HEK293 (cell line): ENCODE measurements at regions of chr9 and their contacts with region 1.

Region 1: DNA sequence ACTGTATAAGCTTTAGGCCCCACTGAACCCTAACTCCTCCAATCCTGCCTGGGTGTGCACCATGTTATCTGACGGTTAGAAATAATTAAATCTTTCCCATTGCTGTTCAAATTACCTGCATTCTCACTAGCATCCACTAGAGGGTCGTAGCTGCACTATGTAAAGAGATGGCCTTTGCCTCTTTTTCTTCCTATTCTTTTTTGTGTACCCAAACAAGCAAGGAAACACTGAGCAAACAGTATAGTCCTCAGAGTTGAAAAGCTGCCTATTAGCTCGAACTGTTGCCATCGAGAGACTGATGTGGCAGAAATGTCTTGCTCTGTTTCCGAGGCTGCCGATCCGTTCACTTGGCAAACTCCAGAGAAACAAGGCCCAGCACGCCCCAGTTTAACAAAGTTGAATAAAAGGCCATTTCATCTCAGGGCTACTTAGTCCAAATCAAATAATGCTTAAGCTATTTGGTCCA is 163.8 kb upstream of the TRPM3 start:
- H3K4me3 ChIP-seq: no peak overlapping the region
- H3K27ac ChIP-seq: no peak overlapping the region
- H3K4me1 ChIP-seq: no peaks in the 10 kb centered on the region
- CTCF ChIP-seq: 0 out of 2 replicates have a peak, but pooled peaks have one; percentile 17

Region 2: GRCh38 chr9:70998962-70999361 is 286.3 kb before region 1 on chr9:
- CTCF ChIA-PET with region 1: no interaction called
- POLR2A ChIA-PET with region 1: no interaction called
- H3K4me3 ChIP-seq: no peak overlapping the region
- H3K27ac ChIP-seq: no peak overlapping the region
- H3K4me1 ChIP-seq: no peaks in the 10 kb centered on the region
- CTCF ChIP-seq: no peak

Region 3: DNA sequence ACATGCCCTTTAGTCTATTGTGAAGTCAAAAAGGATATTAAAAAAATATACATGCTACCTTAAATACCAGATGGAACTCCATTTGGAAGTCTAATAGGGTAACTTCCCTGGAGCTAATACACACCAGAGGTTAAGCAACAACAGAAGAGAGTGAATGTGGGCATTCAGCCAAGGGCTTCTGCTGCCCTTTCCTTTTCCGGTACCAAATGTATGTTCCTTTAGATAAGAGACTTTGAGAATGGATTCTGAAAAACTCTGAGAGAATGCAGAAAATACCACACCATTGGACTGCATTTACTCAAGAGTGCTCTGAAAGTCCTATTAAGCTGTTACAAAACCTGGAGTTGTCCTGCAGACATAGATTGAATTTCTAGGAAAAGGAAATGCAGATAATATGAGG is 140.0 kb before region 1 on chr9:
- CTCF ChIA-PET with region 1: no interaction called
- POLR2A ChIA-PET with region 1: no interaction called
- H3K4me3 ChIP-seq: no peak overlapping the region
- H3K27ac ChIP-seq: no peak overlapping the region
- H3K4me1 ChIP-seq: no peaks in the 10 kb centered on the region
- CTCF ChIP-seq: no peak

Region 4: GRCh38 chr9:71270554-71270953 is 14.7 kb before region 1 on chr9:
- CTCF ChIA-PET with region 1: interaction called, 11 read pairs
- POLR2A ChIA-PET with region 1: no interaction called
- H3K4me3 ChIP-seq: no peak overlapping the region
- H3K27ac ChIP-seq: no peak overlapping the region
- H3K4me1 ChIP-seq: no peaks in the 10 kb centered on the region
- CTCF ChIP-seq: no peak

Region 5: GRCh38 chr9:71295928-71296327 is 10.7 kb after region 1 on chr9:
- CTCF ChIA-PET with region 1: interaction called, 15 read pairs
- POLR2A ChIA-PET with region 1: no interaction called
- H3K4me3 ChIP-seq: no peak overlapping the region
- H3K27ac ChIP-seq: no peak overlapping the region
- H3K4me1 ChIP-seq: no peaks in the 10 kb centered on the region
- CTCF ChIP-seq: no peak

Region 6: DNA sequence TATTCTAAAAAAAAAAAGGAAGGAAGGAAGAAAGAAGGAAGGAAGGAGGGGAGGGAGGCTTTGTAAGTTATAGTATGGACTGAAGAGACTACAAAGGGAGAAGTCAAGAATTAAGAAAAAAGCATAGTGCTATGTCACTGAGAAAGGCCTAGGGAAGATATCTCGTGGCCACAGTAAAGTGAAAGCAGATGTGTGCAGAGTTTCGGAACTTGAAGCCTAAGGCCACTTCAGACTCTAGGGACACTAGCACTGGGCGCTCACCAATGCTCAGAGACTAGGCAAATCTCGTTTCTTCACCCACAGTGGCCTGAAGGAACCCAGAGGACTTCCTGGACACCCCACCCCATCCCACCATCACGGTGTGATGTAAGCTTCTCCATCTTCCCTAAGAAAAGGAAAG is 17.6 kb after region 1 on chr9:
- CTCF ChIA-PET with region 1: interaction called, 11 read pairs
- POLR2A ChIA-PET with region 1: no interaction called
- H3K4me3 ChIP-seq: no peak overlapping the region
- H3K27ac ChIP-seq: no peak overlapping the region
- H3K4me1 ChIP-seq: no peaks in the 10 kb centered on the region
- CTCF ChIP-seq: no peak

Region 7: GRCh38 chr9:71768388-71769174 is 483.4 kb after region 1 on chr9 and contains the start of gene CEMIP2:
- CTCF ChIA-PET with region 1: interaction called, 11 read pairs
- POLR2A ChIA-PET with region 1: interaction called, 3 read pairs
- H3K4me3 ChIP-seq: peak within 1 kb of the TSS; percentile 92
- H3K27ac ChIP-seq: peak within 1 kb of the TSS; percentile 88
- H3K4me1 ChIP-seq: no peaks in the 10 kb centered on the region
- CTCF ChIP-seq: no peak

Region 8: GRCh38 chr9:71819115-71819739 is 534.0 kb after region 1 on chr9:
- CTCF ChIA-PET with region 1: interaction called, 19 read pairs
- POLR2A ChIA-PET with region 1: no interaction called
- H3K4me3 ChIP-seq: no peak overlapping the region
- H3K27ac ChIP-seq: no peak overlapping the region
- H3K4me1 ChIP-seq: no peaks in the 10 kb centered on the region
- CTCF ChIP-seq: no peak

Region 9: GRCh38 chr9:72022841-72023240 is 737.6 kb after region 1 on chr9:
- CTCF ChIA-PET with region 1: interaction called, 12 read pairs
- POLR2A ChIA-PET with region 1: no interaction called
- H3K4me3 ChIP-seq: no peak overlapping the region
- H3K27ac ChIP-seq: no peak overlapping the region
- H3K4me1 ChIP-seq: no peaks in the 10 kb centered on the region
- CTCF ChIP-seq: no peak